GM23248 (cell line): ENCODE measurements at regions of chr6 and their contacts with region 1.

Region 1: DNA sequence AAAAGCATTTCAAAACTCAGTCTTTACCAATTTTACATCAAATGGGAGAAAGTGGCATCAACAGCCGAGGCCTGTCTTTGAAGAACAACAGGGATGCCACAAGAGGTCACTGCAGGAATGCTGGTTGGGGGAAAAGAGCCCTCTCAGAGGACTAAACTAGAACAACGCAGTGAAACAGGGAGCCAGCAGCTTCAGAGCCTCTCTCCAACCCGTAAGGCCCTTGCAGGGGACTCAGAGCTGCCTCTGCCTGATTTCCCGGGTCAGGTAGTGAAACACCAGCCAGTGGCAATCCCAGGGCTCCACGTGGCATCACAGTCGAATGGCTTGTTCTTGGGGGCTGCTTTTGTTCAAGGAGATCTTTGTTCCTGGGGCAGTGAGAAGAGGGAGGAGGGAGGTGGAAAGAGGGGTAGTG is 55.0 kb upstream of the KCNK16 start:
- DNase-seq: peak; percentile 88
- H3K4me3 ChIP-seq: no peak overlapping the region
- H3K27ac ChIP-seq: no peak overlapping the region
- H3K4me1 ChIP-seq: no peaks in the 10 kb centered on the region
- H3K27me3 ChIP-seq: no peaks in the 10 kb centered on the region

Region 2: GRCh38 chr6:39887381-39888070 is 510.0 kb after region 1 on chr6:
- in situ Hi-C with region 1: loop called (anchors 10 kb)
- DNase-seq: peak; percentile 88
- H3K4me3 ChIP-seq: no peak overlapping the region
- H3K27ac ChIP-seq: peak overlapping the region; percentile 58
- H3K4me1 ChIP-seq: peaks cover 27% of the 10 kb centered on the region
- H3K27me3 ChIP-seq: no peaks in the 10 kb centered on the region